Motor neuron (in vitro differentiated cells): ENCODE measurements at regions of chr5 and their contacts with region 1.

Region 1: DNA sequence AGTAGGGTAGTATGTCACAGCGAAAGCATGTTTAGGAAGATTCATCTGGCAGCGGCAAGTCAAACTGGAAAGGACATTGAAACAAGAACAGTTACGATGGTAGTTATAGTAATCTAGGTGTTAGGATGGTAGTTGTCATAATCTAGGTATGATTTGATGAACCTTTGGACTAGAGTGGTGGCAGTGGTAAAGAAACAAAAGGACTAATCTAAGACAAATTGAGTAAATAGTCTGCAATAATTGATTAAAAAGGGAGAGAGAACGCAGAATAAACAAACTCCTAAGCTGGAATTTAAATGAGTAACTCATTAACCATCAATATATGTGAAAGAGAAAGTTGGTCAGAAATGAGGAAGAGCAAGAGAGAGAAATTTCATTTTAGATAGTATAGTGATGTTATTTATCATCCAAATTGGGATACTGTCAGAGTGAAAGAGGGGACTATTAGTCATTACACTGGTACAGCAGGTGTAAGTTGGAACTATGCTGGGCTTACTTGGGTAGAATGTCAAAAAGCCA is 56.8 kb downstream of the MTREX start:
- ATAC-seq: no peak
- H3K4me3 ChIP-seq: no peak overlapping the region
- H3K27ac ChIP-seq: no peak overlapping the region
- H3K4me1 ChIP-seq: no peaks in the 10 kb centered on the region

Region 2: DNA sequence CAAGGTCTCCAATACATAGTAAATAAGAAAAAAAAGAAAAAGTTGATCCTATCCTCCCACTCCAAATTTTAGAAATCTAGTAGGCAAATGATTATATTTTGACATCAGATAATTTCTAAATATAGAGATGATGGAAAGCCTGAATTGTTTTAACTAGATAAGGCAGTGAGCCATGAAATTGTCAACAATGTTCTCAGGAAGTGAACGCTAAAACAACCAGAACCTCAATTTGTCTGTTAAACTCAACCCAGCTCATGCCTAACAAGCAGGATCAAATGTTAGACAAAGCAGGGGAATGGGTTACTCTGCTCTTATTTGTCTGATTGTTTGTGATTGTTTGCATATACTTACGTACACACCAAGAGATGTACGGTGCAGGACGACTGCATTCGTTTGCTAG is 428.4 kb before region 1 on chr5:
- in situ Hi-C with region 1: no loop called
- ATAC-seq: no peak
- H3K4me3 ChIP-seq: no peak overlapping the region
- H3K27ac ChIP-seq: no peak overlapping the region
- H3K4me1 ChIP-seq: no peaks in the 10 kb centered on the region

Region 3: DNA sequence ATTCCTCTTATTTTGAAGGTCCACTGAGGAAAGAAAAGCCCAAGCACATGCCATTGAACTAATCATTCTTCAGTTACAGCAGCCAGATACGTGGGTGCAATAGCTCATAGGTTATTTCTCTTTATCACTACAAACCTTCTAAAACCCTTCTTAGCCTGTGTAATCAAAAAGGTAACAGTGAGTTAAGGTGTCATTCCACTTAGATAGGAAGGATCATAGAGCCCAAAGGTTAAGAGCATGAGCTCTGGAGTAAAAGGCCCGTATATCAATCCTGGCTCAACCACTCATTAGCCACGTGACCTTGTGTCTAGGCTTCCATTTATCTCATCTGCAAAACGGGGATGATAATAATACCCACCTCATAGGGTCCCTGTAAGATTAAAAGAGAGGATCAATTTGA is 201.9 kb before region 1 on chr5:
- in situ Hi-C with region 1: no loop called
- ATAC-seq: no peak
- H3K4me3 ChIP-seq: no peak overlapping the region
- H3K27ac ChIP-seq: no peak overlapping the region
- H3K4me1 ChIP-seq: no peaks in the 10 kb centered on the region

Region 4: DNA sequence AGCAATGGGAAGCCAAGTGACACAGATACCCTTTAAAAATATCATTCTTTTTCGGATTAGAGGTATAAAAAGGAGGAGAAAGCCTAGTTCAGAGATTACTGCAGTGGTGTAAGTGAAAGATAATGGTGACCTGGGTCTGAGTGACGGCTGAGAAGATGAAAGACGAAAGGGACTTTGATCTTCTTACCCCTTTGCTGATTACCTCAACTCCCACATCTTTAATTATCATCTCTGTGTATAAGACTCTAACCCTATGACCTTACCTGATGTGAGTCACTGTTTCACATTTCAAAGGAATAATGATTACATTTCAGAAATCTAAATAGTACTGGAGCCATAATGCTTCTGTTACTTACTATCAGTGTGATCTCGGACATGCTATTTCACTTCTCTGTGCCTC is 109.8 kb before region 1 on chr5:
- in situ Hi-C with region 1: loop called in 1 of 9 experiments (anchors 25 kb)
- ATAC-seq: no peak
- H3K4me3 ChIP-seq: no peak overlapping the region
- H3K27ac ChIP-seq: no peak overlapping the region
- H3K4me1 ChIP-seq: no peaks in the 10 kb centered on the region